ENCODE measurements at regions of chr7 and their contacts with region 1.

Region 1: DNA sequence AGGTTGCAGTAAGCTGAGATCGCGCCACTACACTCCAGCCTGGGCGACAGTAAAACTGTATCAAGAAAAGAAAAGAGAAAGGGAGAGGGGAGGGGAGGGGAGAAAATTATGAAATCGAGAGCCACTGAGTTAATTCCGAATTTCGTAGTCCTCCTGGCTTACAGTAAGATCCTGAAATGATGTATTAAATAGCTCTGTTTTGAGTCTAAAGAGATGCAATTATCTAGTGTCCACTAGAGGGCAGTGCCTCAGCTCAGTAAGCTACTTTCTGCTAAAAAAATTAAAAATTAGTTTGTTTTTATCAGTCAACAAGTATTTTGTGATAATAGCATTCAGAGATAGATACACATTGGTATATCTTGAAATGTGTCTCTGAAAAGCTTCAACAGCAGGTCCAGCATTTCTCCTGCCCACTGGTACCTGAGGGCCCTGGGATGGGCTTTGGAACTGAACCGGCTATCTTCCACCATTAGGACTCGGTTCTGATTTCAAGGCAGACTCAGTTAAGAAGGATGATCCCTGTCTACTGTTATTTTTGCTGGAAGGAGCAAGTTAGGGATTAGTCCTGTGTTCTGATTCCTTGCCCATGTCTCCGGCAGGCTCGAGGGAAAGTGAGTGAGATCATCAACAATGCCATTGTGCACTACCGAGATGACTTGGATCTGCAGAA is 19.5 kb downstream of the TSPAN33 start:
- DNase-seq: peak in 1 of 5 donors; percentile 34
- H3K4me3 ChIP-seq: no peak overlapping the region
- H3K4me3 Mint-ChIP-seq: no peak overlapping the region
- H3K27ac ChIP-seq: no peak overlapping the region
- H3K27ac Mint-ChIP-seq: no peak overlapping the region
- H3K4me1 ChIP-seq: peaks cover 4% of the 10 kb centered on the region
- H3K4me1 Mint-ChIP-seq: peaks cover 0 to 9% (median 1%) of the 10 kb centered on the region in 3 donors
- H3K27me3 ChIP-seq: no peaks in the 10 kb centered on the region
- H3K27me3 Mint-ChIP-seq: no peaks in the 10 kb centered on the region

Region 2: GRCh38 chr7:129150199-129150996 is 13.6 kb before region 1 on chr7:
- CTCF ChIA-PET with region 1: interaction called, 12 read pairs
- POLR2A ChIA-PET with region 1: no interaction called
- DNase-seq: no peak
- H3K4me3 ChIP-seq: no peak overlapping the region
- H3K4me3 Mint-ChIP-seq: no peak overlapping the region
- H3K27ac ChIP-seq: no peak overlapping the region
- H3K27ac Mint-ChIP-seq: peak overlapping the region in 1 of 8 donors; percentile 74
- H3K4me1 ChIP-seq: no peaks in the 10 kb centered on the region
- H3K4me1 Mint-ChIP-seq: peaks cover 7 to 10% (median 8%) of the 10 kb centered on the region in 3 donors
- H3K27me3 ChIP-seq: no peaks in the 10 kb centered on the region
- H3K27me3 Mint-ChIP-seq: peaks cover 0 to 2% of the 10 kb centered on the region in 2 donors

Region 3: DNA sequence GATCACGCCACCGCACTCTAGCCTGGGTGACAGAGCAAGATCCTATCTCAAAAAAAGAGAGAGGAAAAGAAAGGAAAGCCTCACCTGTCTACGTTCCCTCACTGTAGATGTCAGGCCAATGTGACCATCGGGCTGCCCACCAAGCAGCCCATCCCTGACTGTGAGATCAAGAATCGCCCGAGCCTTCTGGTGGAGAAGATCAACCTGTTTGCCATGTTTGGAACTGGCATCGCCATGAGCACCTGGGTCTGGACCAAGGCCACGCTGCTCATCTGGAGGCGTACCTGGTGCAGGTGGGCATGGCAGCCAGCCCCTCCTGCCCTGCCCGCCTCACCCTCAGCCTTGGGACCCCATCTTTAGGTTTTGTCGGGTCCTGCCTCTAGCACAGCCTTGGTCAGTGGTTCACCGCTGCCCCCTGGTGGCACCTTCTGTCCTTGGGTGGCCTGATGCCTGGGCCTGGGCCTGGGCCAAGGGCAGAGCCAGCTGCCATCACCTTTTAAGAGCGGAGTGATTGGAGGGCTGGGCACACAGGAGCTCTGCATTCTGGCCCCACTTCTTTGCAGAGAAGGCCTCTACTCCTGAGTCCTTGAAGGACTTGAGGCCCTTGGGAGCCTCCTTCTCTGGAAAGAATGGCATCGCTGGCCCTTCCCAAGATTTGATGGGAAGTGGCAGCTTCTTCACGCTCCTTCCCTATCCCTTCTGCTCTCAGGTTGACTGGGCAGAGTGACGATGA is 46.4 kb after region 1 on chr7:
- CTCF ChIA-PET with region 1: interaction called, 14 read pairs
- POLR2A ChIA-PET with region 1: no interaction called
- DNase-seq: peak; percentile 30 to 65 (median 39)
- H3K4me3 ChIP-seq: no peak overlapping the region
- H3K4me3 Mint-ChIP-seq: no peak overlapping the region
- H3K27ac ChIP-seq: no peak overlapping the region
- H3K27ac Mint-ChIP-seq: peak overlapping the region in 1 of 8 donors; percentile 60
- H3K4me1 ChIP-seq: no peaks in the 10 kb centered on the region
- H3K4me1 Mint-ChIP-seq: peaks cover 6 to 10% (median 8%) of the 10 kb centered on the region in 3 donors
- H3K27me3 ChIP-seq: no peaks in the 10 kb centered on the region
- H3K27me3 Mint-ChIP-seq: peaks cover 4 to 7% of the 10 kb centered on the region in 2 donors